Sciatic nerve (tissue), 2 donors: ENCODE measurements at regions of chr9 and their contacts with region 1.

Region 1: GRCh38 chr9:83362341-83362995 is 175.7 kb downstream of the FRMD3 start:
- DNase-seq: no peak
- ATAC-seq: no peak

Region 2: GRCh38 chr9:83419961-83420360 is 57.5 kb after region 1 on chr9:
- intact Hi-C with region 1: loop called (anchors 10 kb)
- DNase-seq: no peak
- ATAC-seq: no peak